Pancreas (tissue), 10 donors: ENCODE measurements at regions of chr16 and their contacts with region 1.

Region 1: GRCh38 chr16:46908540-46909372 is 24.6 kb downstream of the GPT2 start:
- DNase-seq: peak in 1 of 6 donors; percentile 57
- ATAC-seq: peak; percentile 19 to 76 (median 66)
- H3K4me3 ChIP-seq: no peak overlapping the region
- H3K27ac ChIP-seq: peak overlapping the region in 1 of 4 donors; percentile 17
- H3K4me1 ChIP-seq: no peaks in the 10 kb centered on the region
- H3K27me3 ChIP-seq: no peaks in the 10 kb centered on the region
- CTCF ChIP-seq: peak; percentile 34 to 70 (median 64)

Region 2: GRCh38 chr16:46853713-46854443 is 54.9 kb before region 1 on chr16:
- intact Hi-C with region 1: loop called in 2 of 3 experiments (anchors 2 to 5 kb)
- DNase-seq: peak; percentile 69 to 90 (median 81)
- ATAC-seq: peak; percentile 81 to 94 (median 93)
- H3K4me3 ChIP-seq: no peak overlapping the region
- H3K27ac ChIP-seq: no peak overlapping the region
- H3K4me1 ChIP-seq: peaks cover 0 to 7% (median 4%) of the 10 kb centered on the region in 3 donors
- H3K27me3 ChIP-seq: no peaks in the 10 kb centered on the region
- CTCF ChIP-seq: peak; percentile 22 to 78 (median 61)

Region 3: GRCh38 chr16:47162670-47163420 is 254.1 kb after region 1 on chr16:
- intact Hi-C with region 1: no loop called
- DNase-seq: no peak
- ATAC-seq: no peak
- H3K4me3 ChIP-seq: no peak overlapping the region
- H3K27ac ChIP-seq: no peak overlapping the region
- H3K4me1 ChIP-seq: no peaks in the 10 kb centered on the region
- H3K27me3 ChIP-seq: no peaks in the 10 kb centered on the region
- CTCF ChIP-seq: no peak